HAP-1 (cell line): ENCODE measurements at regions of chr18 and their contacts with region 1.

Region 1: DNA sequence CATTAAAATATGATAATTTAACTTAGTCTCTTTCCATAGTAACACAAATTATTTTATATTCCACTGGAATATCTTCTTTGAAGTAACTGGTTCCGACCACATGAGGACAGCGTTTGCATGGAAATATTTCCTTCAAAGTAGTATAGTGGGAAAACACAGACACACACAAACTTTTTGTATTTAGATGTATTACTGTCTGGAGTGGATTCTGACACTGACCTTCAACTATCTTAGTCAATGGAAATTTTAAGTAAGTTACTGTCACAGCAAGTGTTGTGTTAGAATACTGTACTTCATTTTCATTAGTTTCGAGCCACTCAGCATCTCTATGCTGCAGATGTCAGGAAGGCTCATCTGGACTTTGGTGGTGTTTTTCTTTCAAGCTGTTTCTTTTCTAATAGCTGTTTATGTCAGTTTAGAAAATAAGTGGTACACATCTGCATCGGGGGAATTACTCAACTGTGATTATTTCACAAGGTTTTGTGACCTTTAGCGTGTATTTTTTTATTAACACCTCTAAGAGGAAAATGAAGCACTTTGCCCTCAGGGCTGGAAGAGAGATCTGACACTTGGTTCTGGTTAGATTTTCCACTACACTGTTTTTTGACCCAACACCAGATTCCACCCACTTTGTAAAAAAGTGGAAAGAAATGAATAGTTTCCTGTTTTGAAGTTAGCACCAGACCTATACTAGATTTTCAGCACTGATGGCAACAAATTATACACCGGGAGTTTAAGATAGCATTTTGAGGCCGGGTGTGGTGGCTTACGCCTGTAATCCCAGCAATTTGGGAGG is 18.9 kb upstream of the THOC1 start:
- DNase-seq: no peak
- H3K4me3 ChIP-seq: no peak overlapping the region
- H3K4me1 ChIP-seq: no peaks in the 10 kb centered on the region
- H3K27me3 ChIP-seq: peaks cover 7% of the 10 kb centered on the region; the same call in 1 of the 2 replicates

Region 2: DNA sequence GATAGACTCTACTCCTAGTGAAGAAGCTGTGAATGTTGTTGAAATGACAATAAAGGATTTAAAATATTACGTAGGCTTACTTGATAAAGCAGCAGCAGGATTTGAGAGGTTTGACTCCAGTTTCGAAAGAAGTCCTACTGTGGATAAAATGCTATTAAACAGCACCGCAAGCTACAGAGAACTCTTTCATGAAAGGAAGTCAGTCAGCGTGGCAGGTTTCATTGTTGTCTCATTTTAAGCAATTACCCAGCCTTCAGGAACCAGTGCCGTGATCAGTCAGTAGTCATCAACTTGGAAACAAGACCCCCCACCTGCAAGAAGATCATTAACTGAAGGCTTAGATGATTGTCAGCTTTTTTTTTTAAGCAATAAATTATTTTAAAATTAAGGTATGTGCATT is 114.4 kb before region 1 on chr18:
- in situ Hi-C with region 1: no loop called
- DNase-seq: no peak
- H3K4me3 ChIP-seq: no peak overlapping the region
- H3K4me1 ChIP-seq: peaks cover 8% of the 10 kb centered on the region; the same call in 1 of the 2 replicates
- H3K27me3 ChIP-seq: no peaks in the 10 kb centered on the region

Region 3: GRCh38 chr18:199768-200167 is 86.9 kb before region 1 on chr18:
- in situ Hi-C with region 1: no loop called
- DNase-seq: no peak
- H3K4me3 ChIP-seq: no peak overlapping the region
- H3K4me1 ChIP-seq: peaks cover 4% of the 10 kb centered on the region; the same call in 1 of the 2 replicates
- H3K27me3 ChIP-seq: no peaks in the 10 kb centered on the region

Region 4: GRCh38 chr18:374721-375168 is 88.0 kb after region 1 on chr18:
- in situ Hi-C with region 1: no loop called
- DNase-seq: no peak
- H3K4me3 ChIP-seq: no peak overlapping the region
- H3K4me1 ChIP-seq: no peaks in the 10 kb centered on the region
- H3K27me3 ChIP-seq: peaks cover 3% of the 10 kb centered on the region; the same call in 1 of the 2 replicates

Region 5: GRCh38 chr18:596288-596881 is 309.7 kb after region 1 on chr18:
- in situ Hi-C with region 1: no loop called
- DNase-seq: peak in 1 of 2 experiments; percentile 62
- H3K4me3 ChIP-seq: no peak overlapping the region
- H3K4me1 ChIP-seq: no peaks in the 10 kb centered on the region
- H3K27me3 ChIP-seq: peaks cover 50% of the 10 kb centered on the region

Region 6: GRCh38 chr18:610214-610903 is 323.6 kb after region 1 on chr18:
- in situ Hi-C with region 1: loop called (anchors 5 kb)
- DNase-seq: no peak
- H3K4me3 ChIP-seq: no peak overlapping the region
- H3K4me1 ChIP-seq: no peaks in the 10 kb centered on the region
- H3K27me3 ChIP-seq: no peaks in the 10 kb centered on the region